A549 (cell line): ENCODE measurements at regions of chr7 and their contacts with region 1.

Region 1: DNA sequence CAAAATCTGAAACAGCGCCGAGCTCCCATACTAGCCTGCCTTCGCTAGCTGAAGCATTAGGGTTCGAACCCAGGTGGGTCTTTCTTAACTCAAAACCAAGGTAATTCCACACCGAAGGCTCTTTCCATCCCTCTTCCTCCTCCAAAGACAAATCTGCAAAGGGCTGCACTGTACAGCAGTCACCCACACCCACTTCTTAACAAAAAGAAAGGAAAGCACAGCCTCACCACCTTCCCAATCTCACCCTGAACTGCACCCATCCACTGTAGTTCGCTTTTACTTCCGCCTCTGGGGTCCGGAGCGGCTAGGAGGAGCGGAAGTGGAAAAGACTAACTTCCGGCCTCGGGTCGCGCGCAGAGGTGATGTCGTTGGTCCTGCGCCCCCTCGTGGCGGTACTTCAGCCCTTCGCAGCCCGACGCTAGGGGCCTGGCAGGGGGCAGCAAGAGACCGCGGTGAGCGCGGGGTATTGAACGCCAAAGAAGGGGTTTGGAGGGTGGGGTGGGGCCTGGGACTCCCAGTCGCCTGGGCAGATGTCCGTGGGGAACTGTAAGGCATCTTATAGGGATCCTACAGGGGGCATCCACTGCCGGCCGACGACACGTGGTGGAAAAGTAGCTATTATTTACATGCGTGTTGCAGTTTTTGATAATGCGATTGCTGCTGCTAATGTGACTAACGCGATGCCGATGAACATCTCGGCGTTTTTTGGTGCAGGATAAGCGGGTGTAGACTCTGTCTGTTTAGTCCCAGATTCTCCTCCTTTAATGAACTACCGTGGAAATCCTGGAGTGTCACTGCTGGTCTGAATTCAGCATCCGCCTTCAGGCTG is at the start of gene MTERF1:
- DNase-seq: peak; percentile 78 to 94
- ATAC-seq: peak; percentile 98 to 100
- H3K4me3 ChIP-seq: peak within 1 kb of the TSS; percentile 80
- H3K27ac ChIP-seq: peak within 1 kb of the TSS; percentile 74 to 89
- H3K4me1 ChIP-seq: peaks cover 3% of the 10 kb centered on the region; the same call in 1 of the 3 replicates
- CTCF ChIP-seq: peak; percentile 98
- EP300 ChIP-seq: no peak
- POLR2A ChIP-seq: peak; percentile 65
- RAD21 ChIP-seq: peak; percentile 88 to 94
- polyA plus RNA-seq, gene MTERF1: 16.4 and 20.1 TPM in 2 replicates

Region 2: GRCh38 chr7:91869661-91870060 is 11.0 kb before region 1 on chr7:
- CTCF ChIA-PET with region 1: interaction called, 31 read pairs
- POLR2A ChIA-PET with region 1: interaction called, 5 read pairs
- DNase-seq: peak in 1 of 2 experiments; percentile 7
- ATAC-seq: peak; percentile 45 to 62; a peak in 3 of 6 replicates
- H3K4me3 ChIP-seq: no peak overlapping the region
- H3K27ac ChIP-seq: no peak overlapping the region
- H3K4me1 ChIP-seq: no peaks in the 10 kb centered on the region
- CTCF ChIP-seq: no peak
- EP300 ChIP-seq: no peak
- POLR2A ChIP-seq: no peak
- RAD21 ChIP-seq: no peak

Region 3: DNA sequence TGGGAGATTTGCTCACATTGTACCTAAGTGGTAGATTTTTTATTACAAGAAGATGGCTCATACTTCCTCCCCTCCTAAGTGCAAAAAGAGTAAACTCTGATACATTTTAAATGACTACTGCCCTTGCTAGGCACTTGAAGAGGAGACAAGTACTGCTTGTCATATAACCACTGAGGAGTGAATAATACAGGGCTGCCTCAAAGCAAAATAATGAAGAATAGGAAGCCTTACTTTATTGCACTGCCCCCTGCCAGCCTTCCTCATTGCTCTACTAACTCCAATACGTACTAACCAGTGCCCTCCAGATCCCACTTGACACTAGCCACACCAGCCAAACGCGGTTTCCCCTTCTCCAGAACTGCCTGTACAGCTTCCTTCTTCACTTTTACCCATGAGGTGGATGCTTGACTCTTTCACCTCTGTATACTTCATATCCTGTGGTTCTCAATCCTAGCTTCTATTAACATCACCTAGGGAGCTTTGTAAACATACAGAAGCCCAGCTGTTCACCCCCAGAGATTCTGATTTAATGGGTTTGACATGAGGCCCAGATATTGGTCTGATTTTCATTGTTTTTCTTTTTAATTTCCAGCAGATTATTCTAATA is 11.6 kb after region 1 on chr7:
- CTCF ChIA-PET with region 1: interaction called, 24 read pairs
- POLR2A ChIA-PET with region 1: interaction called, 4 read pairs
- DNase-seq: no peak
- ATAC-seq: no peak; a peak in 1 of 6 replicates
- H3K4me3 ChIP-seq: no peak overlapping the region
- H3K27ac ChIP-seq: no peak overlapping the region
- H3K4me1 ChIP-seq: no peaks in the 10 kb centered on the region
- CTCF ChIP-seq: no peak
- EP300 ChIP-seq: no peak
- POLR2A ChIP-seq: no peak
- RAD21 ChIP-seq: no peak

Region 4: GRCh38 chr7:91941450-91941849 is 60.8 kb after region 1 on chr7:
- CTCF ChIA-PET with region 1: interaction called, 13 read pairs
- POLR2A ChIA-PET with region 1: interaction called, 5 read pairs
- DNase-seq: peak in 1 of 2 experiments; percentile 35
- ATAC-seq: peak; percentile 8 to 33; a peak in 4 of 6 replicates
- H3K4me3 ChIP-seq: peak overlapping the region; percentile 97
- H3K27ac ChIP-seq: peak overlapping the region; percentile 91 to 92
- H3K4me1 ChIP-seq: peaks cover 25% of the 10 kb centered on the region
- CTCF ChIP-seq: no peak
- EP300 ChIP-seq: no peak
- POLR2A ChIP-seq: no peak
- RAD21 ChIP-seq: no peak